GM12878 (cell line): ENCODE measurements at regions of chr15 and their contacts with region 1.

Region 1: DNA sequence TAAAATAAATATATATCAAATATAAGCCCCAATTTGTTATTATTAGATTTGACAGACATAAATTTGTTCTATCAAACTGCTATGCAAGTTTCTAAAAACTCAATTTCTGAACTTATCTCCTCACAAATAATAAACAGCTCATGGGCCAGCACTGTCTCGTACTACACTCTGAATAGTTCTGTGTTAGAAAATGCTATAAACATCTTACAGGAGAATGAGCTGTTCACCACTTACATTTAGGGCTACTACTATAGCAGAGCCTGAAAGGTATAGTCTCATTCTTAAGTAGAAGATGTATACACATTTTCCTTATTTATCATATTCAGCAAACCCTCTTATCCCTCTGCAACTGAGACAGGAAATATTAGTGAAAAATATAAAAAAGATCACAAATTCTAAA is 12.6 kb downstream of the SLC12A6 start:
- DNase-seq: no peak
- ATAC-seq: peak; percentile 14; the same call in 1 of the 3 replicates
- H3K4me3 ChIP-seq: 0 out of 2 replicates have a peak overlapping the region, but pooled peaks have one; percentile 29
- H3K27ac ChIP-seq: peak overlapping the region; percentile 75
- H3K4me1 ChIP-seq: peaks cover 26% of the 10 kb centered on the region
- H3K27me3 ChIP-seq: no peaks in the 10 kb centered on the region
- CTCF ChIP-seq: no peak
- EP300 ChIP-seq: no peak
- POLR2A ChIP-seq: no peak
- RAD21 ChIP-seq: no peak

Region 2: GRCh38 chr15:34337557-34338306 is 12.8 kb after region 1 on chr15 and contains the start of gene SLC12A6:
- CTCF ChIA-PET with region 1: interaction called, 14 read pairs
- POLR2A ChIA-PET with region 1: interaction called, 37 read pairs
- RAD21 ChIA-PET with region 1: interaction called, 57 read pairs
- SMC1A ChIA-PET with region 1: interaction called, 89 read pairs
- in situ Hi-C with region 1: no loop called
- intact Hi-C with region 1: no loop called
- DNase-seq: no peak
- ATAC-seq: peak; percentile 81
- H3K4me3 ChIP-seq: peak within 1 kb of the TSS; percentile 72
- H3K27ac ChIP-seq: peak within 1 kb of the TSS; percentile 94
- H3K4me1 ChIP-seq: peaks cover 14% of the 10 kb centered on the region
- H3K27me3 ChIP-seq: no peaks in the 10 kb centered on the region
- CTCF ChIP-seq: no peak
- EP300 ChIP-seq: no peak
- POLR2A ChIP-seq: peak; percentile 74
- RAD21 ChIP-seq: no peak
- polyA plus RNA-seq, gene SLC12A6: 4.7 to 4.8 TPM